Activated CD4-positive, alpha-beta T cell treated with anti-CD3 and anti-CD28 coated beads for 36 hours (primary cell): ENCODE measurements at regions of chr3 and their contacts with region 1.

Region 1: DNA sequence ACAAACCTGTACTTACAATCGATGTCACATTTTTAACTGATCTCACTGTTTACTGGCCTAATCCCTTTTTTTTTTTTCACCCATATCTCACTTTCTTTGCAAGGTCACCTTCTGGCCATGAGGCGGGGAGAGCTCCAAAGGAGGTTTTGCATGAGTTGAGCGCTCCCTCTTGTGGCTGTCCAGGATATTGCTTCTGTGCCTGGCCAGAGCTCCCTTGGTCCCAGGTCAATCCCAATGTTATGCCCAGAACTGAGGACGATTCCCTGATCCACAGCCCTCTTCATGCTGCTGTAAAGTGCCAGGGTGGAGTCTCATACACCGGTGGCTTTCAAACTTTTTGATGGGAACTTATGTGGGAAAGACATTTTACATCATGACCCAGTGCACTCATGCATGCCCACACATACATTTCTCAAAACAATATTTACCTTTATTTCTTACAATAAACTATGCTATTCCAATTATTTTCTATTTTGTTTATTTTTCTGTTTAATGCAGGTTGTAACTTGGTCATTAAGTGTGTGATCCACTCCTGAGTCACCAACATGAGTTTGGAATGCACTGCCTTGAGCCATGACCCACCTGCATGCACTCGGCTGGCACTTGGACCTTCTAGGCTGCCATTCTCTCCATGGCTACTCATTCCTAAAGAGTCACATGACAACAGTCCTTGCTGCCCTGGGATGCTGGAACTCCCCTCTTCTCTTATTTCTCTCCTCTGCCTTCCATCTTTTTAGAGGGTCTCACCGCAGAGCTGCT is 9.6 kb upstream of the SST start:
- DNase-seq: peak; percentile 83
- ATAC-seq: peak; percentile 63
- H3K4me3 Mint-ChIP-seq: no peak overlapping the region
- H3K27ac Mint-ChIP-seq: no peak overlapping the region
- H3K4me1 Mint-ChIP-seq: peaks cover 7% of the 10 kb centered on the region
- H3K27me3 Mint-ChIP-seq: peaks cover 43% of the 10 kb centered on the region

Region 2: DNA sequence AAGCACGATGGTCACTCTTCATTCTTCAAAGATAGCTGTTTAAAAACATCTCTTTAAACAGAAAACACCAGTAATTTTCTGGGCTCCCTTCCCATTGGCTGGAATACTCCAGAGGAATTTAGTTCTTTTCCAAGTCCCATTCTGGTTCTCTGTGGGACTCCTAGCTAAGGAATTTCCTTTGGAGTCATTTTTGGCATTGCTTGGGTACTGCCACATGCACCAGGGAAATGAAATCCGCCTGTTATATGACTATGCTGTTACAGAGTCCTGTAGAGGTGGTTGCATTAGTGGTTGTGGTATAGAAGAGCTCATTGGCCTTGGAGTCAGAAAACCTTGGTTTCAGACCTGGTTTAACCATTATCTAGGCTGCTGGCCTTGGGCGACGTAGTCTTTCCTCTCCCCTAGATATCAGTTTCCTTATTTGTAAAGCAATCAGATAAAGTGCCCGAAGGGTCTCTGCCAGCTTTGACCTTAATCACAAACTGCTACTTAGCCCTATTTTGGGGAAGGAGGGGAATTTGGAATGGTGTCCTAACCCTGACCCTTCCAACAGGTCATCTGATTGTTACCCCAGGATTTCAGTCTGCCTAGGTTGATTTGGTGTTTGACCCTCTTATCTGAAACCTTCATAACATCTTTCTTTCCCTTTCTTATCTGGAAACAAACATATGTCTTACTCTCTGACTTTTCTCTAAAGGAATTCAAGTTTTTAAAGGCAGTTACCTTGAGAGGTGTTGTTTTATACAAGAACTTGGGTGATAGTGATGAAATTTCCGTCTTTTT is 469.1 kb before region 1 on chr3:
- CTCF ChIA-PET with region 1: interaction called, 13 read pairs
- POLR2A ChIA-PET with region 1: no interaction called
- intact Hi-C with region 1: no loop called
- DNase-seq: no peak
- ATAC-seq: no peak
- H3K4me3 Mint-ChIP-seq: no peak overlapping the region
- H3K27ac Mint-ChIP-seq: no peak overlapping the region
- H3K4me1 Mint-ChIP-seq: no peaks in the 10 kb centered on the region
- H3K27me3 Mint-ChIP-seq: no peaks in the 10 kb centered on the region

Region 3: DNA sequence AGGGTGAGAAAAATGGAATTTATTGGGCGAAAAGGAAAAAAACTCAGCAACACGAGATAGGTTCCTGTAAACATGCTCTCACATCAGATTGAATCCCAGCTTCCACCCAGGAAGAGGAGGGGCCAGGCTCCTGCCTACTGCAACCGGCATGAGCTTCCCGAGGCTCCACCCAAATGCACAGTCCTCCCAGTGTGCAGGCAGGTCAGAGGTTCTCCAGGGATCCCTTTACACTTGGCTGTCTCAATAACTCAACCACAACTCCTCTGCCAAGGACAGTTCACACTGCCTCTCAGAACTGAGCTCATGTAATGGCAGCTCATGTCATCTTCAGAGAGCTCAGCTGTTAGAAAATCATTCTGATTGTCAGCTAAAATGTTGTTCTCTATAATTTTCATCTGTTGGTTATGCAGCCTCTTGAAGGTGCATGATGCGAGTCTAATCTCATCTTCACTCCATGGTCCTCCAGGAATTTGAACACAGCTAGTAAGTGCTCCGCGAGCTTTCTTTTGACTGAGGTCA is 86.4 kb before region 1 on chr3:
- CTCF ChIA-PET with region 1: interaction called, 13 read pairs
- POLR2A ChIA-PET with region 1: no interaction called
- intact Hi-C with region 1: no loop called
- DNase-seq: no peak
- ATAC-seq: no peak
- H3K4me3 Mint-ChIP-seq: no peak overlapping the region
- H3K27ac Mint-ChIP-seq: no peak overlapping the region
- H3K4me1 Mint-ChIP-seq: no peaks in the 10 kb centered on the region
- H3K27me3 Mint-ChIP-seq: peaks cover 38% of the 10 kb centered on the region

Region 4: DNA sequence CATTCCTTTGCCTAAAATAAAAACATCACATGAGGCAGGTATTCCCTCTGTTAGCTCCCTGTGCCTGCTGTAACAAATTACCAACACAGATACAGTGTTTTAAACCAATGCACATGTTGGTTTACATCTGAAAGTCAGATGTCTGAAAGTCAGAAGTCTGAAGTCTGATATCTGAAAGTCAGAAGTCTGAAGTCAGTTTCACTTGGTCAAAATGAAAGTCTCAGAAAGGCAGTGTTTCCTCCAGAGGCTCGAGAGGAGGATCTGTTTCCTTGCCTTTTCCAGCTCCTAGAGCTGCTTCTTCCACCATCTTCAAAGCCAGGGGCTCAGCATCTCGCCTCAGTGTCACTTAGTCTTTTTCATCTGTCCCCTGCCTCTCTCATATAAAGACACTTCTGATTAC is 31.6 kb before region 1 on chr3:
- CTCF ChIA-PET with region 1: interaction called, 11 read pairs
- POLR2A ChIA-PET with region 1: no interaction called
- intact Hi-C with region 1: no loop called
- DNase-seq: no peak
- ATAC-seq: no peak
- H3K4me3 Mint-ChIP-seq: no peak overlapping the region
- H3K27ac Mint-ChIP-seq: no peak overlapping the region
- H3K4me1 Mint-ChIP-seq: no peaks in the 10 kb centered on the region
- H3K27me3 Mint-ChIP-seq: peaks cover 38% of the 10 kb centered on the region

Region 5: GRCh38 chr3:187714404-187714979 is 34.7 kb after region 1 on chr3:
- CTCF ChIA-PET with region 1: interaction called, 35 read pairs
- POLR2A ChIA-PET with region 1: no interaction called
- intact Hi-C with region 1: loop called (anchors 1 kb)
- DNase-seq: peak; percentile 82
- ATAC-seq: peak; percentile 80
- H3K4me3 Mint-ChIP-seq: no peak overlapping the region
- H3K27ac Mint-ChIP-seq: no peak overlapping the region
- H3K4me1 Mint-ChIP-seq: peaks cover 12% of the 10 kb centered on the region
- H3K27me3 Mint-ChIP-seq: no peaks in the 10 kb centered on the region